ENCODE measurements at regions of chr11 and their contacts with region 1.

Region 1: DNA sequence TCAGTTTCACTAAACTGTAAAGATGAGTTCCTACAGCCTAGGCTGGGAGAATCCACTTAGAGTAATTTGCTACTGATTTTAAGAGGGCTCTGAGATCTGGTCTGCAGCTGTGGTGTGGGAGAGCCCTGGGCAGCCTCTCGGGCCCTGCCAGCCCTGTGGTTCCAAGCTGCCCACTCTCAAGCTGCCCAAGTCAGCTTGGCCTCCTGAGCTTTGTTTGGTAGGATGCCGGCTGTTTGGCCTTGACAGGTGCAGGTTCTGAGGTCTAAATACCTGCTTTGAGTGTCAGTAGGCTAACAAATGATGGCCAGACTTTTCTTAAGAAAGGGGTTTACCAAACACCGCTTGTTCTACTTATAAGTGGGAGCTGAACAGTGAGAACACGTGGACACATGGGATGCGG is 133.3 kb upstream of the TTC12 start:
- DNase-seq: no peak
- H3K4me3 ChIP-seq: no peak overlapping the region
- H3K27ac ChIP-seq: no peak overlapping the region
- H3K4me1 ChIP-seq: no peaks in the 10 kb centered on the region
- H3K27me3 ChIP-seq: no peaks in the 10 kb centered on the region
- CTCF ChIP-seq: no peak
- POLR2A ChIP-seq: no peak

Region 2: DNA sequence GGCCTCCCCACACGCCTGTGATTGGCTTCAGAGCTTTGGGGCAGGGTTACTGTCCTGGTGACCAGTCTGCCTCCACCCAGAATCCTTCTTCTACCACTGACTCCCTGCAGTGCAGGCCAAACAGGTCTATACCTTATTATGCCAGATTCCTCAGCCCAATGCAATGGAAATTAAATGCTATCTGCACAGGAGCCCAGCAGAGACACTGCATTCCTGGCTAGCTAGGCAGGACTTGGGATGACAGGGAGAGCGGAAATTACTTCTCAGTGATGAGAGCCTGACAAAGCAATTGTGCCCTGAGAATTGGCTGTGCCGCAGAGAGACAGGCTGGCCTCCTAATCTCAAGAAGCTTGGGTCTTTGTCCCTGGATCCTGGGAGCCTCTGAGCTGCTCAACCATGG is 363.7 kb before region 1 on chr11:
- intact Hi-C with region 1: no loop called
- DNase-seq: no peak
- H3K4me3 ChIP-seq: no peak overlapping the region
- H3K27ac ChIP-seq: no peak overlapping the region
- H3K4me1 ChIP-seq: no peaks in the 10 kb centered on the region
- H3K27me3 ChIP-seq: no peaks in the 10 kb centered on the region
- CTCF ChIP-seq: no peak
- POLR2A ChIP-seq: no peak

Region 3: DNA sequence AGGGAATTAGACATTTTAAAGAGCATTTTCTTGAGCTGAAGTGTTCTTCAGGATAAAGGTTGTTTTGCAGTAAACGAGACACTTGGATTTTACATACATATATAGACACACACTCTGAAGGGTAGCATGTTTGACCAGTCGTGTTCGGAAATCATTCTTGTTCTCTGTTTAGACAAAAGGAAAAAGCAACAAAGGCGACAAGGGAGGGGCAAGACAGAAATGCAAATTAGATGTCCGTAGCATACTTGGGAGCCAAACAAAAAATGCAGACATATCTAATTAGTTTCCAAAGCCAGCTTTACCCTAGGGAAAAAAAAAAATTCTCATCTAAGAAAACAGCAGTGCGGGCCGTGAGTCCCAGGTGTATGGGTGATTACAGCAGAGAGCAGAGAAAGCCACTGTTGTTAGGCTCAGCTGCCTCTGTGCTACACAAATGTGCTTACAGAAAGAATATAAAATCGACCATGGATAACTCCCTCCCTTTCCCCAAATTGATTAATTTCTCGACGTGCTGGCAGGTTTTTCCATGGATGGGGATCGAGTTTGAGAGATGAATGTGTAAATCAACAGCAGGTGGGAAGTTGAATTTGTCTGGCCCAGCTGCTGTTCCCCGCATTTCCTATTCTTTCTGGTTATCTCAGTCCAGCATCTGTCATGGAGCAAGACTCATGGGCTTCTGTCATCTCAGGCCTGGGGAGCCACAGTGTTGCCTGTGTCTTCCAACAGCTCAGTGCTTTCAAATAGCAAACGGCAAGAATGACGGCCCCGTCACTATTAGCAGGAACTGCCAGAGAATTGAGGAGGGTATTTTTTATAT is 43.2 kb before region 1 on chr11:
- intact Hi-C with region 1: loop called (anchors 2 kb)
- DNase-seq: no peak
- H3K4me3 ChIP-seq: no peak overlapping the region
- H3K27ac ChIP-seq: no peak overlapping the region
- H3K4me1 ChIP-seq: no peaks in the 10 kb centered on the region
- H3K27me3 ChIP-seq: no peaks in the 10 kb centered on the region
- CTCF ChIP-seq: no peak
- POLR2A ChIP-seq: no peak

Region 4: GRCh38 chr11:113162592-113162962 is 18.5 kb before region 1 on chr11:
- intact Hi-C with region 1: no loop called
- DNase-seq: no peak
- H3K4me3 ChIP-seq: no peak overlapping the region
- H3K27ac ChIP-seq: no peak overlapping the region
- H3K4me1 ChIP-seq: peaks cover 4 to 10% of the 10 kb centered on the region in 2 donors
- H3K27me3 ChIP-seq: no peaks in the 10 kb centered on the region
- CTCF ChIP-seq: no peak
- POLR2A ChIP-seq: no peak

Measured in breast epithelium (tissue), 4 donors.